ENCODE measurements at regions of chr7 and their contacts with region 1.

Region 1: GRCh38 chr7:1432411-1433082 is 26.7 kb downstream of the MICALL2 start:
- DNase-seq: peak; percentile 64 to 88 (median 76)
- ATAC-seq: peak; percentile 98
- H3K4me3 ChIP-seq: no peak overlapping the region
- H3K4me3 Mint-ChIP-seq: no peak overlapping the region
- H3K27ac ChIP-seq: no peak overlapping the region
- H3K27ac Mint-ChIP-seq: no peak overlapping the region
- H3K4me1 ChIP-seq: peaks cover 9% of the 10 kb centered on the region
- H3K4me1 Mint-ChIP-seq: peaks cover 5% of the 10 kb centered on the region
- H3K27me3 ChIP-seq: peaks cover 0 to 11% of the 10 kb centered on the region in 2 experiments
- H3K27me3 Mint-ChIP-seq: peaks cover 5% of the 10 kb centered on the region
- CTCF ChIP-seq: peak; percentile 97

Region 2: GRCh38 chr7:1193593-1194424 is 238.7 kb before region 1 on chr7:
- CTCF ChIA-PET with region 1: no interaction called
- POLR2A ChIA-PET with region 1: no interaction called
- intact Hi-C with region 1: loop called in 1 of 2 experiments (anchors 5 kb)
- DNase-seq: peak in 11 of 14 experiments; percentile 11 to 56 (median 37)
- ATAC-seq: peak; percentile 68
- H3K4me3 ChIP-seq: no peak overlapping the region
- H3K4me3 Mint-ChIP-seq: no peak overlapping the region
- H3K27ac ChIP-seq: no peak overlapping the region
- H3K27ac Mint-ChIP-seq: no peak overlapping the region
- H3K4me1 ChIP-seq: peaks cover 9% of the 10 kb centered on the region
- H3K4me1 Mint-ChIP-seq: peaks cover 10% of the 10 kb centered on the region
- H3K27me3 ChIP-seq: no peaks in the 10 kb centered on the region
- H3K27me3 Mint-ChIP-seq: peaks cover 17% of the 10 kb centered on the region
- CTCF ChIP-seq: no peak

Region 3: DNA sequence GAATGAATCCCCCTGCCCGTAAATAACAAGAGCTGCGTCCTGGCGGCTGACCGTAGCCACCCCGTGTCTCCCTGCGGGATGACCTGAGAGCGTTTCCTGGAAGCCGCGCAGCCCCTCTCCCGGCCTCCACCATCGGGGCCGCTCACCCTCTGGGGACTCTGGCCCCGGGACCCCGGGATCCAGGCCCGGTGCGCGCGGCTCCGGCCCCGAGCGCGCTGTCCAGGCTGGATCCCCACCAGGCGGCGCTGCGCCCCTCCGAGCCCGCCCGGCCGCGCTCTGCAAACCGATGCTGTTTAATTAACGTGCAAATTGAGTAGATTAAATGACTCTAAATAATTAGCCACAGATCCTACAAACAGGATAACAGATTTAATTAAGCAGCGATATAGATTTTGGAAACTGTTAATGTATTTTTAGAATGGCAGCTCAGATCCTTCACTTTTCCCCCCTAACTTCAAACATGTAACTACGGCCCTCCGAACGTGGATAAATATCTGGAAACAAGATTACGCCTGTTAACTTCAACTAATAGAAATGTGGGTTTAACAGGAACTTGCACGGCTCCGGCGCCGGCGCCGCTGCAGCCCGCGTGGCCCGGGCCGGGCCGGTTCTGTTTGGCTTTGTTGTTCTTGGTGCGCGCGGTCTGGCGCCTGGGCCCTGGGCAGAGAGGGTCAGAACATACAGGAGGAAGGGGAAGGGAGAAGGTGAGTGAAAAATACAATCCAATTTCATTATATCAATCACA is 206.9 kb before region 1 on chr7:
- CTCF ChIA-PET with region 1: interaction called, 4 read pairs
- POLR2A ChIA-PET with region 1: no interaction called
- intact Hi-C with region 1: loop called in 1 of 2 experiments (anchors 2 kb)
- DNase-seq: peak in 13 of 14 experiments; percentile 14 to 69 (median 38)
- ATAC-seq: peak; percentile 48
- H3K4me3 ChIP-seq: no peak overlapping the region
- H3K4me3 Mint-ChIP-seq: no peak overlapping the region
- H3K27ac ChIP-seq: no peak overlapping the region
- H3K27ac Mint-ChIP-seq: no peak overlapping the region
- H3K4me1 ChIP-seq: peaks cover 7% of the 10 kb centered on the region
- H3K4me1 Mint-ChIP-seq: peaks cover 17% of the 10 kb centered on the region
- H3K27me3 ChIP-seq: peaks cover 64 to 86% of the 10 kb centered on the region in 2 experiments
- H3K27me3 Mint-ChIP-seq: peaks cover 76% of the 10 kb centered on the region
- CTCF ChIP-seq: peak; percentile 71

Region 4: DNA sequence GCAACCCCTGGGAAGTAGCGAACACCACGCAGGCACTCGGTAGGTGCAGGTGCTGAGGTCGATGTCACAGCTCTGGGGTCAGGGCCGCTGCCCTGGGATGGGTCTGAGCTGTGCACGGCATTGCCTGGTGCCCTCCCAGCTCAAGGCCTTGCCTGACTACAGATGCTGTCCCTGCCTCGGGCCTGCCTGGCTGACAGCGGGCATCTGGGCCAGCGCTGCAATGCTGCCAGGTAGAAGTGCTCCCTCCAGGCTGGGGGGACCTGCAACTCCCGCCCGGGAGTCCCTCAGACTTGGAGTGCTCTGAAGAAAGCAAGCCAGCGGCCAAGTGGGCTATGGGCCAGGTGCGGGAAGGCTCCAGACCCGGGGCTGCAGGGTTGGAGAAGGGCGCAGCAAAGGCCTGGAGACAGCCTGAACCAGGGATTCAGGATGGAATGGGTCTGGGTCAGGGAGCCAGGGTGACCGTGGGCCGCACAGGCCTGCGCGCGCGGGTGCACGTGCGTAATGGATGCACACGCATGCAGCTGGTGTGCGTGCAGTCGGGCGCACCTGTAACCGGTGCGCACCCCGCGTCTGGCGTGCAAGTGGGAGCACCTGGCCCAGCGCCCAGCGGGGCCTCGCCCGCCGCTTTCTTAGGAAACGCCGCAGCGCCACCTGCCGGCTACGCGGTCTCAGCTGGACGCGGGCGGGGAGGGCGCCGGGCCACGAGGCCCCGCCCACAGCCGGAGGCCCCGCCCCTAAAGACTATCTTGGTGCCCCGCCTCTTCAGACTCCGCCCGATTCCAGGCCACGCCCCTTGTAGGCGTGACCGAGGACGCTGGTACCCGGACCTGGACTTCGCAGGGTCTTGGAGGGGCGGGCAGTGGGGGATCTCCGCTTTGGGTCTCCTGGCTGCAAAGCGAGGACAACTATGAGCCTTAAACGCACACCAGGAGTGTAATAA is 20.0 kb before region 1 on chr7:
- CTCF ChIA-PET with region 1: interaction called, 12 read pairs
- POLR2A ChIA-PET with region 1: no interaction called
- intact Hi-C with region 1: loop called (anchors 1 to 2 kb)
- DNase-seq: peak; percentile 85 to 94 (median 89)
- ATAC-seq: peak; percentile 83
- H3K4me3 ChIP-seq: peak overlapping the region; percentile 26
- H3K4me3 Mint-ChIP-seq: peak overlapping the region; percentile 6
- H3K27ac ChIP-seq: no peak overlapping the region
- H3K27ac Mint-ChIP-seq: no peak overlapping the region
- H3K4me1 ChIP-seq: peaks cover 22% of the 10 kb centered on the region
- H3K4me1 Mint-ChIP-seq: peaks cover 8% of the 10 kb centered on the region
- H3K27me3 ChIP-seq: peaks cover 0 to 3% of the 10 kb centered on the region in 2 experiments
- H3K27me3 Mint-ChIP-seq: peaks cover 19% of the 10 kb centered on the region
- CTCF ChIP-seq: peak; percentile 75

Region 5: DNA sequence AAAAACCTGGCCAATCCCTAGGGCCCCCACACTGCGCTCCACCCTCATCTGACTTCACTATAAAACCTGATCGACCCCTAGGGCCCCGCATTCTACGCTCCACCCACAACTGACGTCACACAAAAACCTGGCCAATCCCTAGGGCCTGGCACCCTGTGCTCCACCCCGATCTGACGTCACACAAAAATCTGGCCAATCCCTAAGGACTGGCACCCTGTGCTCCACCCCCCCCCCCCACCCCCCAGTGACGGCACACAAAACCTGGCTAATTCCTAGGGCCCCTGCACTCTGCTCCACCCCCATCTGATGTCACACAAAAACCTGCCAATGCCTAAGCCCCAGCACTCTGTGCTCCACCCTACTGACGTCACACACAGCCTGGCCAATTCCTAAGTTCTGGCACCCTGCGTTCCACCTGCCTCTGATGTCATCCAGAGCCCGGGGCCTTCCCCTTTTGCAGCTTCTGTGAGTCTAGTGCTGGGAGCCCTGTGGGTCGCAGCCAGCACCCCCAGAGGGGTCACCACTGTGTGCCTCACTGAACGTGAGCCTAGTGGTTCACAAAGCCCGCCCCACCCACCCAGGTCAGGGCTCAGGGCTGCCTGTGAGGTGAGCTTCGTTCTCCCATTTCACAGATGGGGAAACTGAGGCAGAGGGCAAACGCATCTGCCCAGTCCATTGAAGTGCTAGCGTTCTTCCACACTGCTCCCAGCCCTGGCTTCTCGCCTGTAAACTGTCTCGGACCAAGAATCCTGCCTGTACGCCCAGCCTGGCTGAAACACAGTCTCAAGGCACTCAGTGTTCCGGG is 13.8 kb before region 1 on chr7:
- CTCF ChIA-PET with region 1: interaction called, 12 read pairs
- POLR2A ChIA-PET with region 1: no interaction called
- intact Hi-C with region 1: loop called (anchors 1 to 2 kb)
- DNase-seq: peak in 2 of 14 experiments; percentile 25 to 44
- ATAC-seq: no peak
- H3K4me3 ChIP-seq: no peak overlapping the region
- H3K4me3 Mint-ChIP-seq: no peak overlapping the region
- H3K27ac ChIP-seq: no peak overlapping the region
- H3K27ac Mint-ChIP-seq: no peak overlapping the region
- H3K4me1 ChIP-seq: peaks cover 17% of the 10 kb centered on the region
- H3K4me1 Mint-ChIP-seq: peaks cover 17% of the 10 kb centered on the region
- H3K27me3 ChIP-seq: peaks cover 0 to 3% of the 10 kb centered on the region in 2 experiments
- H3K27me3 Mint-ChIP-seq: peaks cover 11% of the 10 kb centered on the region
- CTCF ChIP-seq: no peak

Region 6: DNA sequence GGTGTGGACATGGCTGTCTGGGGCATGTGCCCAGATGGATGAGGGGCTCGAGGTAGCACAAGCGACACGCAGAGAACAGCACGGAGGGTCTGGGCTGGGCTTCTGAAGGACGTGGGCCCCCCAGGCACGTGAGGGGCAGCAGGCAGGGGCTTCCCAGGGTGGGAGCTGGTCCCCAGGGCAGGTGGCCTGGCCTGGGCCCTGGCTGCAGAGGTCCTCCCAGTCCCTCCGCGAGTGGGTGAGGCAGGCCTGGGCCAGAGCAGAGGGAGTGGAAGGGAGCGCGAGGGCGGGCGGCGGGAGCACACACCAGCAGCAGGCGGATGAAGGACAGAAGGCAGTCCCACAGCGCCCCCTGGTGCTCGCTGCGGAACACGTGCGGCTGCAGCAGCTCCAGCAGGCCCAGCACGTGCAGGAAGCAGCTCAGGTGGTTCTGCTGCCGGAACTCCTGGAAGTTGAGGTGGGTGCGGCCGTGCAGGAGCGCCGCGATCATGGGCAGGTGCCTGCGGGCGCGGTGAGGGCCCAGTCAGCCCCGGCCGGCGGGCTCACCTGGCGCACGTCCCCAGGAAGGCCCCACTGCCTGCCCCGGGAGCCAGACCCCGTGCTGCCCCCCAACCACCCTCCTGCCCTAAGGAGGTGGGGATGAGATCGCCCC is 41.4 kb after region 1 on chr7:
- CTCF ChIA-PET with region 1: interaction called, 8 read pairs
- POLR2A ChIA-PET with region 1: no interaction called
- intact Hi-C with region 1: loop called in 1 of 2 experiments (anchors 2 kb)
- DNase-seq: peak; percentile 82 to 94 (median 86)
- ATAC-seq: peak; percentile 97
- H3K4me3 ChIP-seq: no peak overlapping the region
- H3K4me3 Mint-ChIP-seq: no peak overlapping the region
- H3K27ac ChIP-seq: no peak overlapping the region
- H3K27ac Mint-ChIP-seq: no peak overlapping the region
- H3K4me1 ChIP-seq: peaks cover 18% of the 10 kb centered on the region
- H3K4me1 Mint-ChIP-seq: peaks cover 16% of the 10 kb centered on the region
- H3K27me3 ChIP-seq: no peaks in the 10 kb centered on the region
- H3K27me3 Mint-ChIP-seq: no peaks in the 10 kb centered on the region
- CTCF ChIP-seq: peak; percentile 90